Mammary epithelial cell (primary cell): ENCODE measurements at regions of chr4 and their contacts with region 1.

Region 1: GRCh38 chr4:183098723-183099536 is at the start of gene WWC2:
- DNase-seq: peak; percentile 91
- H3K4me3 ChIP-seq: peak within 1 kb of the TSS; percentile 64 to 96 (median 95)
- H3K27ac ChIP-seq: peak within 1 kb of the TSS; percentile 68
- H3K4me1 ChIP-seq: peaks cover 3% of the 10 kb centered on the region
- H3K27me3 ChIP-seq: no peaks in the 10 kb centered on the region
- CTCF ChIP-seq: no peak
- total RNA-seq, gene WWC2: 20.0 to 35.7 TPM

Region 2: GRCh38 chr4:183130328-183131173 is 31.6 kb after region 1 on chr4:
- CTCF ChIA-PET with region 1: no interaction called
- dilution Hi-C with region 1: no loop called
- in situ Hi-C with region 1: no loop called
- intact Hi-C with region 1: loop called (anchors 5 kb)
- DNase-seq: peak; percentile 74
- H3K4me3 ChIP-seq: peak overlapping the region in 1 of 3 experiments; percentile 1
- H3K27ac ChIP-seq: peak overlapping the region; percentile 9
- H3K4me1 ChIP-seq: peaks cover 9% of the 10 kb centered on the region
- H3K27me3 ChIP-seq: no peaks in the 10 kb centered on the region
- CTCF ChIP-seq: no peak

Region 3: GRCh38 chr4:183241322-183241640 is 142.4 kb after region 1 on chr4:
- CTCF ChIA-PET with region 1: no interaction called
- dilution Hi-C with region 1: no loop called
- in situ Hi-C with region 1: no loop called
- intact Hi-C with region 1: loop called (anchors 2 kb)
- DNase-seq: peak; percentile 90
- H3K4me3 ChIP-seq: no peak overlapping the region
- H3K27ac ChIP-seq: peak overlapping the region; percentile 48
- H3K4me1 ChIP-seq: peaks cover 18% of the 10 kb centered on the region
- H3K27me3 ChIP-seq: no peaks in the 10 kb centered on the region
- CTCF ChIP-seq: no peak